Heart right ventricle (tissue), 16 donors: ENCODE measurements at regions of chr16 and their contacts with region 1.

Region 1: DNA sequence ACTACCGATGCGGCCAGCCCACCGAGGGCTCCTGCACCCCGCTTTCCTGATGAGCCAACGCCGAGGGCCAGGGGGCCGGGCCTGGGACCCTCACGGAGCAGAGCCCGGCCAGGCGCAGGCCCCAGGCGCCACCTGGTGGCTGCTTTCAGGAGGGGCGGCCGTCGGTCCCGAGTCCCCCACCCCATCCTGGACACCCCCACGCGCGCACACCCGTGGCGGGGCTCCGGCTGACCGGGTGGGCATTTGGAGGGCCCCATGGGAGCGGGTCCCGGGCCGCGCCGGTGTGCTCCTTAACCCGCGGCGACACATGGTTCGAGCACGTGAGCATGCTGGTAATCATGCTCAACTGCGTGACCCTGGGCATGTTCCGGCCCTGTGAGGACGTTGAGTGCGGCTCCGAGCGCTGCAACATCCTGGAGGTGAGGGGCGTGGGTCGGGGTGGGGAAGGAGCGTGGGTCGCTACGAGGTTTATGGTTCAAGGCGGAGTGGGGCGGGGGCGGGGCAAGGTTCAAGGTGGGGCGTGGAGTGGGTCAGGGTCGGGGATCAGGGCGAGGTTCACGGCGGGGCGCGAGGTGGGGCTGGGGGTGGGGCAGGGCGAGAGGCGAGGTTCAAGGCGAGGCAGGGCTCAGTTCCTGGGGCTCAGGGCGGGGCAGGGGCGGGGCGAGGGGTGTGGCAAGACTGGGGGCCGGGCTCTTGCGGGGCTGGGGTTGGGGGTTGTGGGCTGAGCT is 30.2 kb downstream of the TPSG1 start:
- DNase-seq: no peak
- ATAC-seq: peak in 6 of 8 donors; percentile 20 to 40 (median 26)
- H3K4me3 ChIP-seq: no peak overlapping the region
- H3K27ac ChIP-seq: no peak overlapping the region
- H3K4me1 ChIP-seq: peaks cover 0 to 4% (median 0%) of the 10 kb centered on the region in 9 donors
- H3K27me3 ChIP-seq: peaks cover 0 to 23% (median 8%) of the 10 kb centered on the region in 7 donors
- CTCF ChIP-seq: peak; percentile 61 to 85 (median 74)

Region 2: GRCh38 chr16:813204-813915 is 381.5 kb before region 1 on chr16:
- intact Hi-C with region 1: loop called in 2 of 10 experiments (anchors 10 kb)
- DNase-seq: peak in 1 of 2 donors; percentile 60
- ATAC-seq: peak; percentile 51 to 83 (median 67)
- H3K4me3 ChIP-seq: peak overlapping the region in 7 of 10 donors; percentile 12 to 34 (median 23)
- H3K27ac ChIP-seq: no peak overlapping the region
- H3K4me1 ChIP-seq: peaks cover 0 to 16% (median 5%) of the 10 kb centered on the region in 9 donors
- H3K27me3 ChIP-seq: peaks cover 7 to 69% (median 63%) of the 10 kb centered on the region in 7 donors
- CTCF ChIP-seq: peak; percentile 31 to 75 (median 67)

Region 3: DNA sequence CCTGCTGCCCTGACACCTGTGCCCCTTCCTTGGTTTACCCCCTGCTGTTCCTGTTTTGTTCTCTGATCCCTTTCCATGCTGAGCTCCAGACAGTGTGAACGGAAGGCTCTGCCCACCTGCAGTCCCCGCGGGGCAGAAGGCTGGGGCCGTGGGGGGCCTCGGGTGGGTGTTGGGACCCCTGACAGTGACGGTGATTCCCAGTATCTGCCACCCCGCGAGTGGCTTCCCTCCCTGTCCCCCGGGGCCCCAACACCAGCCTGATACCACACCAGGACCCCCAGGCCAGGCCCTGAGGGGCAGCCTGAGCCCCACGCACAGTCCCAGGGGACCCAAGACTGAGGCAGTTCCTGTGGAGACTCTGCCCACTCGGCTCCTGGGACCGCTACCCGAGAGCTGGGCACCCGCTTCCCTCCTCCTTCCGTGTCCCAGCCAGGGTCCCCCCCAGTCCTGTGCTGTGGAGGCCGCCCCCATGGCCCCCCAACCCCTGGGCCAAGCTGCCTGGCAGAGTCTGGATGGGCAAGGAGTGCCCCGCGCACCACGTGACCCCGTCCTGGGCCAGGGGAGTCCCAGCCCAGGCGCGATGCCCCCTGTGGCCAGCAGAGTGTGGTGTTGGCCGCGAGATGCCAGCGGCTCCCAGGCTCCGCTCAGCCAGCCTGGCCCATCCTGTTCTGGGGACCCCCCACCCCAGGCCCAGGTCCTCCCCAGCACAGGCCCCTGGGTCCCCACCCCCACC is 88.8 kb before region 1 on chr16:
- intact Hi-C with region 1: loop called in 7 of 10 experiments (anchors 1 to 2 kb)
- DNase-seq: peak; percentile 42 to 71
- ATAC-seq: peak; percentile 54 to 84 (median 69)
- H3K4me3 ChIP-seq: no peak overlapping the region
- H3K27ac ChIP-seq: no peak overlapping the region
- H3K4me1 ChIP-seq: peaks cover 0 to 7% (median 5%) of the 10 kb centered on the region in 9 donors
- H3K27me3 ChIP-seq: peaks cover 21 to 91% (median 75%) of the 10 kb centered on the region in 7 donors
- CTCF ChIP-seq: peak; percentile 60 to 82 (median 78)